CD4-positive, alpha-beta memory T cell (primary cell): ENCODE measurements at regions of chr21 and their contacts with region 1.

Region 1: DNA sequence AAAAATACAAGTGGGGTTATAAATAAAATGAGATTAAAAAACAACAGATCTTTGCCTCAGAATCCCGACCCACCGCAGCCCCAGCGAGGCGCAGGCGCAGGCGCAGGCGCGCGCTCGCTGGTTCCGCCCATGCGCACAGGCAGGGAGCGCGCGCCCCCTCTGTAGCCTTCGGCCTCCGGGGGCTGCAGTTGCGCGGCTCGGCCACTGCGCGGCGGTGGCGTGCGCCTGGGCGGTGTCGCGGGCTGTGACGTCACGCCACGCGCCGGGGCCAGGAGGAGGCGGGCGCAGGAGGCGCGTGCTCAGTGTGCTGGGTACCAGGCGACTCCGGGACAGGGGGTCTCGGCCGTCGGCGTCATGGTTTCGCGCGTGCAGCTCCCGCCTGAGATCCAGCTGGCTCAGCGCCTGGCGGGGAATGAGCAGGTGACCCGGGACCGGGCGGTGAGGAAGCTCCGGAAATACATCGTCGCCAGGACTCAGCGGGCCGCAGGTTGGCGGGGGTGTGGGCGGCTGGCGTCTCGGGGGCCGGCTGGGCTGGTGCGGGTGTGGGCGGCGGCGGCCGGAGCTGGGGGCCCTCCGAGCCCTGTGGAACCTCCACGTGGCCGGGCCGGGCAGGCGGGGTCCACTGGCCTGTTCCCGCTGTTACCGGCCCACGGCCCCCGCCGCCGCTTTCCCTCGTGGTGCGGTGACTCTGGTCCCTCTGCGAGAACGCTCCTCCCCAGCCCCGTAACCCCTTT is at the start of gene RRP1:
- DNase-seq: peak; percentile 85 to 99 (median 95)
- H3K4me3 ChIP-seq: peak within 1 kb of the TSS; percentile 80 to 90
- H3K4me3 Mint-ChIP-seq: peak within 1 kb of the TSS; percentile 90 to 95 (median 91)
- H3K27ac ChIP-seq: peak within 1 kb of the TSS; percentile 72
- H3K27ac Mint-ChIP-seq: peak within 1 kb of the TSS; percentile 89 to 96 (median 91)
- H3K4me1 ChIP-seq: peaks cover 21% of the 10 kb centered on the region
- H3K4me1 Mint-ChIP-seq: peaks cover 11 to 28% (median 21%) of the 10 kb centered on the region in 4 donors
- H3K27me3 ChIP-seq: no peaks in the 10 kb centered on the region
- H3K27me3 Mint-ChIP-seq: no peaks in the 10 kb centered on the region
- total RNA-seq, gene RRP1: 25.4 to 27.7 TPM

Region 2: GRCh38 chr21:43728467-43729390 is 60.7 kb before region 1 on chr21:
- CTCF ChIA-PET with region 1: interaction called, 3 read pairs
- POLR2A ChIA-PET with region 1: interaction called, 12 read pairs
- intact Hi-C with region 1: no loop called
- DNase-seq: peak; percentile 64 to 91 (median 72)
- H3K4me3 ChIP-seq: peak overlapping the region; percentile 51 to 69
- H3K4me3 Mint-ChIP-seq: peak overlapping the region; percentile 77 to 91 (median 80)
- H3K27ac ChIP-seq: peak overlapping the region; percentile 47
- H3K27ac Mint-ChIP-seq: peak overlapping the region; percentile 84 to 96 (median 93)
- H3K4me1 ChIP-seq: peaks cover 34% of the 10 kb centered on the region
- H3K4me1 Mint-ChIP-seq: peaks cover 30 to 53% (median 44%) of the 10 kb centered on the region in 4 donors
- H3K27me3 ChIP-seq: no peaks in the 10 kb centered on the region
- H3K27me3 Mint-ChIP-seq: no peaks in the 10 kb centered on the region

Region 3: DNA sequence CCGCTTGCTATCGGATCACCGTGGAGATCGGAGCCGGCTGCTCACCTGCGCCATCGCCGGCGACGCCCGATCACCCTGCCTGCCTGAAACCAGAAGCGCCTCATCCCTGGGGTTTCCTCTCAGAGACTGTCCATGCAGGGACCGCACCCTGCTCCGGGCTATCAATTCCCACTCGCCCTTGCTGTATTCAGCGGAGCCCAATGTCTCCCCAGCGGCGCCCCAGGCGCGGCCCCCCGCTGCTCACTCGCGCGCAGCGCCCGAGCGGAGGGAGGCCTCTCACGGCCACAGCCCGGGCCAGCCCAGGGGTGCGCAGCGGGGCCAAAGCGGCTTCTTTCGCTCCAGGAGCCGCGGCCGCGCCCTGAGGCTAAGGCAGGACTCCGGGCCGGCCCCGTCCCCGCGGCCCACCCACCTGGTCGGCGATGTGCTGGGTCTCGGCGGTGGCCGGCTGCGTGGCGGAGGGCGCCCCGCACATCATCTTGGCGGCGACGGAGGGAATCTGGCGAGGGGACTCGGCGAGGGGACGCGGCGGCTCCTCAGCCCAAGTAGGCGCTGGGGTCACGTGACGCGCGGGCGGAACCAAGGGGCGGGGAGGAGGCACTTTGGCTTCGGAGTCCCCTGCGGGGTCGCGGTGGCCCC is 13.5 kb before region 1 on chr21 and contains the start of gene CSTB:
- CTCF ChIA-PET with region 1: interaction called, 9 read pairs
- POLR2A ChIA-PET with region 1: interaction called, 3 read pairs
- intact Hi-C with region 1: loop called (anchors 1 kb)
- DNase-seq: peak; percentile 69 to 88 (median 77)
- H3K4me3 ChIP-seq: peak within 1 kb of the TSS; percentile 79 to 93
- H3K4me3 Mint-ChIP-seq: peak within 1 kb of the TSS; percentile 91 to 97 (median 93)
- H3K27ac ChIP-seq: peak within 1 kb of the TSS; percentile 76
- H3K27ac Mint-ChIP-seq: peak within 1 kb of the TSS; percentile 84 to 92 (median 87)
- H3K4me1 ChIP-seq: peaks cover 31% of the 10 kb centered on the region
- H3K4me1 Mint-ChIP-seq: peaks cover 23 to 55% (median 34%) of the 10 kb centered on the region in 4 donors
- H3K27me3 ChIP-seq: no peaks in the 10 kb centered on the region
- H3K27me3 Mint-ChIP-seq: no peaks in the 10 kb centered on the region
- total RNA-seq, gene CSTB: 46.0 to 48.8 TPM

Region 4: GRCh38 chr21:43866260-43866629 is 76.8 kb after region 1 on chr21:
- CTCF ChIA-PET with region 1: no interaction called
- POLR2A ChIA-PET with region 1: no interaction called
- intact Hi-C with region 1: loop called (anchors 2 kb)
- DNase-seq: peak; percentile 29 to 63 (median 47)
- H3K4me3 ChIP-seq: peak overlapping the region; percentile 62 to 69
- H3K4me3 Mint-ChIP-seq: peak overlapping the region; percentile 84 to 92 (median 88)
- H3K27ac ChIP-seq: peak overlapping the region; percentile 72
- H3K27ac Mint-ChIP-seq: peak overlapping the region; percentile 93 to 99 (median 95)
- H3K4me1 ChIP-seq: peaks cover 40% of the 10 kb centered on the region
- H3K4me1 Mint-ChIP-seq: peaks cover 33 to 53% (median 44%) of the 10 kb centered on the region in 4 donors
- H3K27me3 ChIP-seq: no peaks in the 10 kb centered on the region
- H3K27me3 Mint-ChIP-seq: peaks cover 0 to under 1% of the 10 kb centered on the region in 2 donors

Region 5: GRCh38 chr21:44517175-44517899 is 727.9 kb after region 1 on chr21:
- CTCF ChIA-PET with region 1: no interaction called
- POLR2A ChIA-PET with region 1: no interaction called
- intact Hi-C with region 1: no loop called
- DNase-seq: no peak
- H3K4me3 ChIP-seq: no peak overlapping the region
- H3K4me3 Mint-ChIP-seq: no peak overlapping the region
- H3K27ac ChIP-seq: no peak overlapping the region
- H3K27ac Mint-ChIP-seq: peak overlapping the region in 2 of 7 donors; percentile 23 to 63
- H3K4me1 ChIP-seq: no peaks in the 10 kb centered on the region
- H3K4me1 Mint-ChIP-seq: peaks cover 0 to 4% (median 0%) of the 10 kb centered on the region in 4 donors
- H3K27me3 ChIP-seq: no peaks in the 10 kb centered on the region
- H3K27me3 Mint-ChIP-seq: no peaks in the 10 kb centered on the region